AG04449 (cell line): ENCODE measurements at regions of chr4 and their contacts with region 1.

Region 1: DNA sequence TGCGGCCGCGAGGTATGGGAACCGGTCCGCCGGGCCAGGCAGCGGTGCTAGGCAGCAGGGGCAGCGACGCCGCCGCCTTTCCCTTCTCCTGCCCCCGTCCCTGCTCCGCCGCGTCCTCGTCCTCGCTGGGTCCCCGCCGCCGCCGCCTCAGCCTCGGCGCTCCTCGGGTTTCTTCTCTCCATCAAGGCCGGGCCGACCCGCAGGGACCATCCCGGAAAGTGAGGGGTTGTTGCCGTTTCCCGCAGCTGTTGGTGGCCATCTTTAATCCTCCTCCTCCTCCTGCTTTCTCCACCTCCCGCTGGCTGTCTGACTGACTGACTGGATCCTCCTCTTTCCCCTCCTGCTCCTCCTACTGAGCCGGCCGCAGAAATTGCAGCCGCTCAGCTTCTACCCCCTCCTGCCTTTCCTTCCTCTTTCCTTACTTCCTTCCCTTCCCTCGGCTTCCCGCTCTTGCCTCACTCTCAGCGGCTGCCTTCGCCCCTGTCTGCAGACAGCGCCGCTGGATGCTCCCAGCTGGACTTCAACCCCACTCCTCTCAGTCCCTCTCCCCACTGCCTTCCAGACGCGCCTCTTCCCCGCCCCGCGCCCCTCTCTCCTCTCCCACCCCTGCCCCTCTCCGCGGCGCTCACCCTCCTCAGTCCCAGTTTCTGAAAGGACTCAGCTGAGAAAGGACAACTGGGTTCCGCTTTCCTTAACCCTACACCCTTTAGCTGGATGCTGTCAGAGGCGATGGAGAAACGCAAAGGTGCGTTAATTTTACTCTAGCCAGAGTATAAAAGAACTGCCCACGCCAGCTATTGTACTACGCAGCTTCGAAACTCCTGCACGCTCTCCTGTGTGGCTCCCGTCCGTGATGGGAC is at the start of gene WDFY3:
- DNase-seq: no peak
- H3K4me3 ChIP-seq: peak within 1 kb of the TSS; percentile 76
- CTCF ChIP-seq: peak; percentile 6

Region 2: GRCh38 chr4:84582302-84583000 is 384.2 kb before region 1 on chr4:
- CTCF ChIA-PET with region 1: interaction called, 36 read pairs
- POLR2A ChIA-PET with region 1: no interaction called
- DNase-seq: no peak
- H3K4me3 ChIP-seq: peak overlapping the region; percentile 60
- CTCF ChIP-seq: no peak

Region 3: DNA sequence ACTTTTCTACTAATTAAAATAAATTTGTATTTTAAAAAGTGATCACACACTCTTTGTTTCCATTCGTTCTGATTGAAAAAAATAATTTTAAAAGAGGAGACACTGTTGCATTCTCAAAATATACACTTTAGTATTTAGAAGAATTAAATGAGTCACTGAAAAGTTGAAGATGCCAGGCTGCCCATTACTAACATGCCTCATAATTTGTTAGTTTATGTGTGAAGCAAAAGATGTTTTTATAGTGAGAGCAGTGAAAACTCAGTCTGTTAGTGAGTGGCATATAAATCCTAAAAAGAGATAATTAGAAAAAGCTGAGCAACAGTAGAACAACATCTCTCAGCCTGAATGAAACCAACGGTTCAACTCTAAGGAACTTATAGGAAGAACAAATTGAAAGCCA is 240.3 kb before region 1 on chr4:
- CTCF ChIA-PET with region 1: interaction called, 10 read pairs
- POLR2A ChIA-PET with region 1: no interaction called
- DNase-seq: no peak
- H3K4me3 ChIP-seq: no peak overlapping the region
- CTCF ChIP-seq: no peak

Region 4: DNA sequence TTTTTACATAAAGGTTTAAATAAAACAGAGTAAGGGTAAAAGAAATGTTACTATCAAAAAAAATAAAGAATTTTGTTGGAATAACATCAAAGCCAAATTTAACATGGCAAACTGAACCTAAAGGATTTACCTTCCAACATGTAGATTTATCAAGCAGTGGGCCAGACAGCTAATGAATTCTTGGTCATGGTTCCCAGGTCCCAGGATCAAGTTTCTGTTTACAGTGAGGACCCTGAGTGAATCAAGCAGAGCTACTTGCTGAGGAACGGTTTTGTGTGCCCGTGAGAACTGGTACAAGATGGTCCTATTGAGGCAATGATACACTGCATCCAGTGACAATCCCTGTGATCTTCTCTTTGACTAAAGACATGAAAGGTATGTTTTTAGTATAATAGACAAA is 226.6 kb before region 1 on chr4:
- CTCF ChIA-PET with region 1: interaction called, 20 read pairs
- POLR2A ChIA-PET with region 1: interaction called, 3 read pairs
- DNase-seq: no peak
- H3K4me3 ChIP-seq: no peak overlapping the region
- CTCF ChIP-seq: no peak

Region 5: DNA sequence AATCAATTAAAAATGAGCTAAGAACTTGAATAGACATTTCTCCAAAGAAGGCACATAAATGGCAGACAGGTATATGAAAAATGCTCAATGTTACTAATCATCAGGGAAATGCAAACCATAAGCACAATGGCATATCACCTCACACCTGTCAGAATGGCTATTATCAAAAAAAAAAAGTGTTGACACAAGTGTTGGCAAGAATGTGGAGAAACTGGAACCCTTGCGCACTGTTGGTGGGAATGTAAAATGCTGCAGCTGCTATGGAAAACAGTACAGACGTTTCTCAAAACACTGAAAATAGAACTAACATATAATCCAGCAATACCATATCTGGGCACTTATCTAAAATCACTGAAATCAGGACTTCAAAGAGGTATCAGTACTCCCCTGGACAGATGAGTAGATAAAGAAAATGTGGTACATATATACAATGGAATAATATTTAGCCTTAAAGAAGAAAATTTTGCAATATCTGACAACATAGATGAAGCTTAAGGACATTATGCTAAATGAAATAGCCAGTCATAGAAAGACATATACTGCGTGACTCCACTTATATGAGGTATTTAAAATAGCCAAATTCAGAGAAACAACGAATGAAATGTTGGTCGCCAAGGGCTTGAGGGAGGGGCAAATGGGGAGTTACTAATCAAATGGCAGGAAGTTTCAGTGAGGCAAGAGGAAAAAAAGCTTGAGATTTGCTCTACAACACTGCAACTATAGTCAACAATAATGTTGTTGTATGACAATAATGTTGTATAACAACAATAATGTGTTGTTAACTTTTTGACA is 175.6 kb before region 1 on chr4:
- CTCF ChIA-PET with region 1: interaction called, 30 read pairs
- POLR2A ChIA-PET with region 1: interaction called, 3 read pairs
- DNase-seq: no peak
- H3K4me3 ChIP-seq: no peak overlapping the region
- CTCF ChIP-seq: no peak

Region 6: GRCh38 chr4:84849051-84849640 is 117.5 kb before region 1 on chr4:
- CTCF ChIA-PET with region 1: interaction called, 11 read pairs
- POLR2A ChIA-PET with region 1: no interaction called
- DNase-seq: no peak
- H3K4me3 ChIP-seq: no peak overlapping the region
- CTCF ChIP-seq: no peak